ENCODE measurements at regions of chr6 and their contacts with region 1.

Region 1: GRCh38 chr6:79672631-79673111 is 41.5 kb downstream of the SH3BGRL2 start:
- DNase-seq: peak in 1 of 2 experiments; percentile 72
- H3K4me3 ChIP-seq: no peak overlapping the region
- H3K4me3 Mint-ChIP-seq: peak overlapping the region; percentile 79
- H3K27ac Mint-ChIP-seq: peak overlapping the region; percentile 83
- H3K4me1 ChIP-seq: peaks cover 76% of the 10 kb centered on the region
- H3K4me1 Mint-ChIP-seq: peaks cover 71% of the 10 kb centered on the region
- H3K27me3 ChIP-seq: no peaks in the 10 kb centered on the region
- H3K27me3 Mint-ChIP-seq: no peaks in the 10 kb centered on the region
- CTCF ChIP-seq: peak; percentile 41 to 75

Region 2: DNA sequence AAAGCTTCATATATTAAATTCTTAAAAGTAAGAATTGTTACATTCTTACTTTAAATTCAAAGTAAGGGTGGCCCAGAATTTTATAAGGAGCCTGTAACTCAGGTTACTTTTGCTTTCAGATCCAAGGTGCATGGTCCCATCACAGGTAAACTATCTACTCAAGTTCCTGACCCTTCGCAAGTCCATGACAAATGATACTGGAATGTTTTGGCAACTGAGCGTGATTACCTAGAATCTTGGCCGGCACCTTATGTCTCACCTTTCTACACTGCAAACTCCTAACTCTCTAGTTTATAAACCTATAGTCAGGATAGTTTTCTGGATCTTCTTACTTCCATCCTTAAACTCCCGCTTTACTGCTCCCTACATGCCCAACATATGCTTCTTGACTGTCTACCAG is 370.3 kb before region 1 on chr6:
- CTCF ChIA-PET with region 1: interaction called, 3 read pairs
- POLR2A ChIA-PET with region 1: no interaction called
- intact Hi-C with region 1: loop called (anchors 5 kb)
- DNase-seq: no peak
- H3K4me3 ChIP-seq: no peak overlapping the region
- H3K4me3 Mint-ChIP-seq: no peak overlapping the region
- H3K27ac Mint-ChIP-seq: peak overlapping the region; percentile 68
- H3K4me1 ChIP-seq: peaks cover 48% of the 10 kb centered on the region
- H3K4me1 Mint-ChIP-seq: peaks cover 15% of the 10 kb centered on the region
- H3K27me3 ChIP-seq: no peaks in the 10 kb centered on the region
- H3K27me3 Mint-ChIP-seq: no peaks in the 10 kb centered on the region
- CTCF ChIP-seq: no peak

Region 3: DNA sequence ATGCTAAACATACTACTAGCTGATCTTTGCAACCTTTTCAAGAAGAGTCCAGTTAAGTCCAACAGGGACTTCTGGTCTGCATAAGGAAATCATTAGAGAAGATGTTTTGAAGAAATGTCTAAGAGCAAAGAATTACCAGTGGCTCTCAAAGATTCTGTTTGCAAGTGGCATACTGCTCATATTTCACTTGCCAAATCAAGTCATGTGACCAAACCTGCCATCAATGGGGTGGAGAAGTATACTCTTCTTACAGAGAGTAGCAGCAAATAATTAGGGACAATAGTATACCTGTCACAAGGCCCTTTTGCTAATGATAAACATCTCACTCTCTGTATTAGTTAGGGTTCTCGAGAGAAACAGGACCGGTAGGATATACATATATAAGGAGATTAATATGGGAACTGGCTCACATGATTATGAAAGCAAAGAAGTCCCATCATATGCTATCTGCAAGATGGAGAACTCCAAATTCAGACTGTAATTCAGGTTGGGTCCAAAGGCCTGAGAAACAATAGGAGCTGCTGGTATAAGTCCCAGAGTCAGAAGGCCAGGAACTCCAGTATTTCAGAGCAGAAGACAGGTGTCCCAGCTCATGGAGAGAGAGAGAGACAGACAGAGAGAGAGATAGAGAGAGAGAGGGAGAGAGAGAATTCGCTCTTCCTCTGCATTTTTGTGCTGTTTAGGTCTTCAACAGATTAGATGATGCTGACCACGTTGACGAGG is 246.9 kb before region 1 on chr6:
- CTCF ChIA-PET with region 1: no interaction called
- POLR2A ChIA-PET with region 1: no interaction called
- intact Hi-C with region 1: no loop called
- DNase-seq: no peak
- H3K4me3 ChIP-seq: no peak overlapping the region
- H3K4me3 Mint-ChIP-seq: no peak overlapping the region
- H3K27ac Mint-ChIP-seq: no peak overlapping the region
- H3K4me1 ChIP-seq: no peaks in the 10 kb centered on the region
- H3K4me1 Mint-ChIP-seq: no peaks in the 10 kb centered on the region
- H3K27me3 ChIP-seq: no peaks in the 10 kb centered on the region
- H3K27me3 Mint-ChIP-seq: no peaks in the 10 kb centered on the region
- CTCF ChIP-seq: no peak

Region 4: DNA sequence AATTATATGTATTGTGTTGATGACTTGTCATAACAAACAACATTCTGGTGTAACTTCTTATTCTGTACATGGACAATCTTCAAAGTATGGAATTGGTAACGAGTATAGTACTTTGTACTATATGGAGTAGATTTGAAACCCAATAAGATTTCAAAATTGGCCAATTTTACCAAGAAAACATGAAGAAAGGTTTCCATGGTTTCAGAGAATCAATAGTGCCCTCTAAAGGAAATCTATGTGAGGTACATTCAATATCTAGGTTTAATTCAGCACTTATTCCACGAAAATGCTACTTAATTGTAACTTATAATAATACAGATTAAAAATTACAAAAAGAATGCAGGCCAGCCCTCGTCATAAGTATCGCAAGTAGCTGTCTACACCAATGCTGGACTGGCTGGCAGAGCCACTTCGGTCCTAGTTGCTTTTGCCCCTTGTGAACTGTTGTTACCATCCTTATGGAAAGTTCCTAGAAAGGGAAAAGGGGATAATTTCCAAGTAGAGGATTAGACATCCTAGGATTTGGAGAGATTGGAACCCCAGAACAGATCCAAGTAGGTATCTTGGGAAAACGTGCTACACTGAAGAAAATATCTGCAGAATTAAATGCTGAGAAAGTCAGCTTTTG is 206.3 kb before region 1 on chr6:
- CTCF ChIA-PET with region 1: no interaction called
- POLR2A ChIA-PET with region 1: no interaction called
- intact Hi-C with region 1: loop called (anchors 5 kb)
- DNase-seq: no peak
- H3K4me3 ChIP-seq: no peak overlapping the region
- H3K4me3 Mint-ChIP-seq: no peak overlapping the region
- H3K27ac Mint-ChIP-seq: peak overlapping the region; percentile 57
- H3K4me1 ChIP-seq: peaks cover 88% of the 10 kb centered on the region
- H3K4me1 Mint-ChIP-seq: peaks cover 53% of the 10 kb centered on the region
- H3K27me3 ChIP-seq: no peaks in the 10 kb centered on the region
- H3K27me3 Mint-ChIP-seq: no peaks in the 10 kb centered on the region
- CTCF ChIP-seq: peak; percentile 35 to 51

Region 5: GRCh38 chr6:79544939-79545450 is 127.7 kb before region 1 on chr6:
- CTCF ChIA-PET with region 1: interaction called, 14 read pairs
- POLR2A ChIA-PET with region 1: interaction called, 4 read pairs
- intact Hi-C with region 1: loop called (anchors 1 kb)
- DNase-seq: peak; percentile 90 to 93
- H3K4me3 ChIP-seq: no peak overlapping the region
- H3K4me3 Mint-ChIP-seq: peak overlapping the region; percentile 42
- H3K27ac Mint-ChIP-seq: peak overlapping the region; percentile 69
- H3K4me1 ChIP-seq: peaks cover 22% of the 10 kb centered on the region
- H3K4me1 Mint-ChIP-seq: peaks cover 14% of the 10 kb centered on the region
- H3K27me3 ChIP-seq: no peaks in the 10 kb centered on the region
- H3K27me3 Mint-ChIP-seq: no peaks in the 10 kb centered on the region
- CTCF ChIP-seq: peak; percentile 40 to 74

Region 6: GRCh38 chr6:79604583-79605037 is 68.1 kb before region 1 on chr6:
- CTCF ChIA-PET with region 1: no interaction called
- POLR2A ChIA-PET with region 1: no interaction called
- intact Hi-C with region 1: loop called (anchors 1 kb)
- DNase-seq: peak; percentile 82 to 90
- H3K4me3 ChIP-seq: no peak overlapping the region
- H3K4me3 Mint-ChIP-seq: peak overlapping the region; percentile 18
- H3K27ac Mint-ChIP-seq: peak overlapping the region; percentile 80
- H3K4me1 ChIP-seq: peaks cover 96% of the 10 kb centered on the region
- H3K4me1 Mint-ChIP-seq: peaks cover 62% of the 10 kb centered on the region
- H3K27me3 ChIP-seq: no peaks in the 10 kb centered on the region
- H3K27me3 Mint-ChIP-seq: no peaks in the 10 kb centered on the region
- CTCF ChIP-seq: no peak

Region 7: GRCh38 chr6:79646006-79646405 is 26.7 kb before region 1 on chr6:
- CTCF ChIA-PET with region 1: interaction called, 3 read pairs
- POLR2A ChIA-PET with region 1: no interaction called
- intact Hi-C with region 1: loop called (anchors 2 kb)
- DNase-seq: peak in 1 of 2 experiments; percentile 38
- H3K4me3 ChIP-seq: no peak overlapping the region
- H3K4me3 Mint-ChIP-seq: no peak overlapping the region
- H3K27ac Mint-ChIP-seq: no peak overlapping the region
- H3K4me1 ChIP-seq: peaks cover 19% of the 10 kb centered on the region
- H3K4me1 Mint-ChIP-seq: peaks cover 57% of the 10 kb centered on the region
- H3K27me3 ChIP-seq: no peaks in the 10 kb centered on the region
- H3K27me3 Mint-ChIP-seq: no peaks in the 10 kb centered on the region
- CTCF ChIP-seq: peak; percentile 33 to 40

Region 8: GRCh38 chr6:79869600-79870084 is 197.0 kb after region 1 on chr6:
- CTCF ChIA-PET with region 1: no interaction called
- POLR2A ChIA-PET with region 1: no interaction called
- intact Hi-C with region 1: loop called (anchors 5 kb)
- DNase-seq: peak; percentile 80 to 88
- H3K4me3 ChIP-seq: 0 out of 2 replicates have a peak overlapping the region, but pooled peaks have one; percentile 4
- H3K4me3 Mint-ChIP-seq: peak overlapping the region; percentile 42
- H3K27ac Mint-ChIP-seq: no peak overlapping the region
- H3K4me1 ChIP-seq: no peaks in the 10 kb centered on the region; the same call in 1 of the 2 replicates
- H3K4me1 Mint-ChIP-seq: peaks cover 25% of the 10 kb centered on the region
- H3K27me3 ChIP-seq: no peaks in the 10 kb centered on the region
- H3K27me3 Mint-ChIP-seq: no peaks in the 10 kb centered on the region
- CTCF ChIP-seq: peak; percentile 86 to 95